ENCODE measurements at regions of chr18 and their contacts with region 1.

Region 1: DNA sequence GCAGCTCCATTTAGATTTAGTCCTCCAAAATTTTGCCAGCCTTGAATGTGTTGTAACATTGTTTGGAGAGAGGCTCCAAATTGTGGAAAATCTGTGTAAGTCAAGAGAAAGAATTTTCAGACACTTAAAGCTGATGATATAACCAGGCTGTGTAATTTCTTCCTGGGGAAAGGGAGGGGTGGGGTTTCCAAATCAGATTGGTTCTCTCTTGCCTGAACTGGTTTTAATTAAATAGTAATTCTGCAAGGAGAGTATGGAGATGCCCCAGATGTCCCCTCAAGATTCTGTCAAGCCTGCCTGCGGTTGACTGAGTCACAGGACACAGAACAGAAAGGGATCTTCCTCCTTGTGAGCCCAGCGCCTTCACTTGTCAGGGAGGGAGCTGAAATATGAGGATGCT is 54.5 kb downstream of the C18orf63 start:
- DNase-seq: no peak
- H3K4me3 ChIP-seq: no peak overlapping the region
- H3K27ac ChIP-seq: no peak overlapping the region
- H3K4me1 ChIP-seq: no peaks in the 10 kb centered on the region
- H3K27me3 ChIP-seq: no peaks in the 10 kb centered on the region
- CTCF ChIP-seq: no peak
- EP300 ChIP-seq: no peak
- POLR2A ChIP-seq: no peak
- RAD21 ChIP-seq: no peak

Region 2: GRCh38 chr18:74353169-74353775 is 16.8 kb before region 1 on chr18:
- CTCF ChIA-PET with region 1: interaction called, 21 read pairs
- POLR2A ChIA-PET with region 1: no interaction called
- DNase-seq: peak in 1 of 2 experiments; percentile 13
- H3K4me3 ChIP-seq: no peak overlapping the region
- H3K27ac ChIP-seq: no peak overlapping the region
- H3K4me1 ChIP-seq: no peaks in the 10 kb centered on the region
- H3K27me3 ChIP-seq: no peaks in the 10 kb centered on the region
- CTCF ChIP-seq: peak; percentile 48 to 88 (median 82)
- EP300 ChIP-seq: no peak
- POLR2A ChIP-seq: no peak
- RAD21 ChIP-seq: peak; percentile 88 to 91

Region 3: DNA sequence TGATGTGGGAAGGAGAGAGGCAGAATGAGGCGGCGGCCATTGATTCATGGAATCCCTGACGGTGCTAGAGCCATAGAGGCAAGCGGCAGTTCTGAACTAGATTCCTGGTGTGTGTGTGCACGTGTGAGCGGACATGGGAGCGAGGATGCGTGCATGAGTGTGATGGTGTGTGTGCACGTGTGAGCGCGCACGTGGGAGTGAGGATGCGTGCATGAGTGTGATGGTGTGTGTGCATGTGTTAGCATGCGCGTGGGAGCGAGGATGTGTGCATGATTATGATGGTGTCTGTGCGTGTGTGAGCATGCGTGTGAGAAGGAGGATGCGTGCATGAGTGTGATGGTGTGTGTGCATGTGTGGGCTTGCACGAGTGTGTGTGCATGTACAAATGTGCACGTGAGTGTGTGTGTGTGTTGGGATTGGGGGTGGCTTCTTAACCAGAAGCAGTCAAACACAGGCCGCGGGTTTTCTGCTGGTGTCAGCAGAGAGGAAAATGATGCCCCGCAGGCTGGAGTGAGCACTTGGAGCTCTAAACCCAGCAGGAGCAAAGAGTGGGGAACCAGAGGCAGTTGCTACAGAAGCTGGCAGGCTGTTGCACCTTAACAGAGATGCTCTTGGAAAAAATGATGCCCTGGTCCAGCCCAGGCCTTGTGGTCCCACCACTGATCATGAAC is 57.5 kb after region 1 on chr18:
- CTCF ChIA-PET with region 1: no interaction called
- POLR2A ChIA-PET with region 1: no interaction called
- DNase-seq: no peak
- H3K4me3 ChIP-seq: no peak overlapping the region
- H3K27ac ChIP-seq: no peak overlapping the region
- H3K4me1 ChIP-seq: no peaks in the 10 kb centered on the region; a peak in 1 of 7 replicates
- H3K27me3 ChIP-seq: no peaks in the 10 kb centered on the region
- CTCF ChIP-seq: no peak
- EP300 ChIP-seq: no peak
- POLR2A ChIP-seq: no peak
- RAD21 ChIP-seq: no peak